GM10248 (cell line): ENCODE measurements at regions of chr2 and their contacts with region 1.

Region 1: GRCh38 chr2:45741161-45741850 is 89.8 kb downstream of the PRKCE start:
- DNase-seq: no peak
- CTCF ChIP-seq: no peak

Region 2: GRCh38 chr2:45724335-45724734 is 17.0 kb before region 1 on chr2:
- CTCF ChIA-PET with region 1: interaction called, 25 read pairs
- POLR2A ChIA-PET with region 1: interaction called, 3 read pairs
- DNase-seq: no peak
- CTCF ChIP-seq: no peak

Region 3: GRCh38 chr2:45729753-45730512 is 11.4 kb before region 1 on chr2:
- CTCF ChIA-PET with region 1: interaction called, 25 read pairs
- POLR2A ChIA-PET with region 1: interaction called, 3 read pairs
- DNase-seq: peak; percentile 47
- CTCF ChIP-seq: peak; percentile 52